WTC11 (cell line): ENCODE measurements at regions of chr15 and their contacts with region 1.

Region 1: DNA sequence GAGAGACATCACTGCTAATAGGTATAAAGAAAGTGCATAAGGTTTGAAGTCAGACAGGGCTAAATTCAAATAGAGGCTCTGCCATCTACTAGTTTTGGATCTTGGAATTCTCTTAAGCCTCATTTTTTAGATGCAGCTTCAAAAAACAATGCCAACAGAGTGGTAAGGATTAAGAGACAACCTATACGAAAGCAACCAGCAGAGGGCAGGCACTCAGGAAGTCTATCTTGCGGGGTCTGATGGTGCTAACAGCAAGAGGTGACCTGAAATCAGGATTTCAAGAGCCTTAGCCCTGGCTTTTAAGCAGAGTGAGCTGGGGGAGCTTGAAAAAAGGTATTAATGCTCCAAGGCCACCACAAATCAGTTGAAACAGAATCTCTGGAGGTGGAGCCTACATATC is 40.7 kb downstream of the LDHAL6B start:
- DNase-seq: peak; percentile 67
- ATAC-seq: peak; percentile 95
- H3K4me3 Mint-ChIP-seq: no peak overlapping the region
- H3K27ac Mint-ChIP-seq: peak overlapping the region; percentile 23; the same call in 1 of the 2 replicates
- H3K4me1 Mint-ChIP-seq: peaks cover 3% of the 10 kb centered on the region
- H3K27me3 Mint-ChIP-seq: no peaks in the 10 kb centered on the region
- CTCF ChIP-seq: peak; percentile 45

Region 2: DNA sequence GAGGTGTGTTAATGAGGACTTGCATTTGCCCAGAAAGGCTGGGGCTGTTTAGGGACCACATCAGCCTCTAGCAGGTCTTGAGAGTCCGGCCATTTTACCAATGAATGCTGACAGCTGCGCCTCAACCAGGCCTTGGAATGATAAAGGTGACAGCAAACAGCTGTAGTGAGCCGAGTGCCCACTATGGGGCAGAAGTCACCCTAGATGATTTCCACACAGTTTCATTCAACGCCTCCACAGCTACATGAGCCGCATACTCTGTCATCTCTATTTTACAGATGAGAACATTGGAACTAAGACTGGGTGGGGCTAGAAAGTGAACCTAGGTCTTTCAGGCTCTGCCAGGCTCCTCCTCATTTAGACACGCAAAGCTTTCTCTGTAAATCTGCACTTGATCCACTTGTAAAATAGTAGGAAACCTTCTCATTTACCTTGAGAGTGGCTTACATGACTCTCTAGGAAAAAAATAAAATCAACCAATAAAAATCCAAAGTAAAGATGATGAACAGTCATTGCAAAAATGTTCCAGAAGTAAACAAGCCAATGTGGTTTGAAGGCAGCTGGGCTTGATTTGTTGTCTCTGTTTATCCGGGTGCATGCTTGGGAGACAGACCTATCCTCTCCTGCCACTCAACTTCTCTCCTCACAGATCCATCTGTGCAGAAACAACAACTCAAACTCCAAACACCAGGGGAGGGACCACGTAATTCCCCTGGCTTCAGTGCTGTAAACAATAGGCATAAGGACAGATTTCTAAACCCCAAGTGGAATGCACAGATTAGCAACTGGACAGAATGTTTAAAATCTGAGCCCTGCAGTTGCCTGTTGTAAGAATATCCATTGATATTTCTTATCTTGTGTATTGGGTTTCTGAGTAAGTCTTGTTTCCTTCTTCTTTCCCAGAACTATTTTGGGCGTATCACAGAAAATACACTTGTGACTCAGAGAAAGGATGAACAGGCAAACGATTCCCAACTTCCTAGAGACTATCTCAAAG is 72.2 kb before region 1 on chr15:
- CTCF ChIA-PET with region 1: interaction called, 11 read pairs
- POLR2A ChIA-PET with region 1: no interaction called
- DNase-seq: peak; percentile 65
- ATAC-seq: peak; percentile 96
- H3K4me3 Mint-ChIP-seq: no peak overlapping the region
- H3K27ac Mint-ChIP-seq: peak overlapping the region; percentile 78
- H3K4me1 Mint-ChIP-seq: peaks cover 8% of the 10 kb centered on the region
- H3K27me3 Mint-ChIP-seq: no peaks in the 10 kb centered on the region
- CTCF ChIP-seq: no peak

Region 3: GRCh38 chr15:59353994-59354416 is 106.6 kb after region 1 on chr15:
- CTCF ChIA-PET with region 1: interaction called, 14 read pairs
- POLR2A ChIA-PET with region 1: no interaction called
- DNase-seq: peak; percentile 31
- ATAC-seq: peak; percentile 84
- H3K4me3 Mint-ChIP-seq: peak overlapping the region; percentile 65
- H3K27ac Mint-ChIP-seq: peak overlapping the region; percentile 99
- H3K4me1 Mint-ChIP-seq: peaks cover 76% of the 10 kb centered on the region
- H3K27me3 Mint-ChIP-seq: peaks cover 60% of the 10 kb centered on the region
- CTCF ChIP-seq: no peak

Region 4: GRCh38 chr15:59401824-59402569 is 154.6 kb after region 1 on chr15:
- CTCF ChIA-PET with region 1: interaction called, 14 read pairs
- POLR2A ChIA-PET with region 1: no interaction called
- DNase-seq: no peak
- ATAC-seq: peak; percentile 72
- H3K4me3 Mint-ChIP-seq: 0 out of 2 replicates have a peak overlapping the region, but pooled peaks have one; percentile 26
- H3K27ac Mint-ChIP-seq: no peak overlapping the region
- H3K4me1 Mint-ChIP-seq: peaks cover 42% of the 10 kb centered on the region
- H3K27me3 Mint-ChIP-seq: peaks cover 88% of the 10 kb centered on the region
- CTCF ChIP-seq: no peak

Region 5: GRCh38 chr15:59420986-59421618 is 173.7 kb after region 1 on chr15:
- CTCF ChIA-PET with region 1: interaction called, 26 read pairs
- POLR2A ChIA-PET with region 1: no interaction called
- DNase-seq: peak; percentile 36
- ATAC-seq: peak; percentile 97
- H3K4me3 Mint-ChIP-seq: no peak overlapping the region
- H3K27ac Mint-ChIP-seq: no peak overlapping the region
- H3K4me1 Mint-ChIP-seq: peaks cover 19% of the 10 kb centered on the region
- H3K27me3 Mint-ChIP-seq: peaks cover 26% of the 10 kb centered on the region
- CTCF ChIP-seq: no peak